ENCODE measurements at regions of chr14 and their contacts with region 1.

Region 1: GRCh38 chr14:105917933-105918436 is 391.6 kb downstream of the TMEM121 start:
- DNase-seq: peak; percentile 10 to 28 (median 23)
- ATAC-seq: no peak
- H3K4me3 ChIP-seq: no peak overlapping the region
- H3K27ac ChIP-seq: no peak overlapping the region
- H3K4me1 ChIP-seq: no peaks in the 10 kb centered on the region
- H3K27me3 ChIP-seq: no peaks in the 10 kb centered on the region

Region 2: DNA sequence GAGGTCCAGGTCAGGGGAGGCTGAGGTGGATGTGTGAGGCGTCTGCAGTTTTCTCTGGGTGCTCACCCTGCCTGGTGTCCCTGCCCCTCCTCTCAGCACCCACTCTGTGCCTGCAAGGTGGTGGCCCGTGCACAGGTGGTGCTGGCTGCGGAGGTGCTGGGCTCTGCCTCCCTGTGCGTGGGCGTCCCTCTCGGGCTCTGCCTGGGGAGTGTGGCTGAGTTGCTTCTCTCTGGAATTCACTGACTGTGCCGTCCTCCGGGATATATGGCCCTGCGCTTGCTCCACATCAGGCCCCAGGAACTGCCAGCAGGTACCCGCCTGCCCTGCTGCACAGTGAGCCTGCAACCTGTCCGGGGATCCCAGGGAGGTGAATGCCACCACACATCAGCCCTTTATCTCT is 12.5 kb before region 1 on chr14:
- intact Hi-C with region 1: loop called in 1 of 4 experiments (anchors 2 kb)
- DNase-seq: peak in 1 of 3 donors; percentile 2
- ATAC-seq: no peak
- H3K4me3 ChIP-seq: no peak overlapping the region
- H3K27ac ChIP-seq: no peak overlapping the region
- H3K4me1 ChIP-seq: no peaks in the 10 kb centered on the region
- H3K27me3 ChIP-seq: no peaks in the 10 kb centered on the region

Region 3: GRCh38 chr14:106294324-106294723 is 376.3 kb after region 1 on chr14:
- intact Hi-C with region 1: no loop called
- DNase-seq: no peak
- ATAC-seq: no peak
- H3K4me3 ChIP-seq: no peak overlapping the region
- H3K27ac ChIP-seq: no peak overlapping the region
- H3K4me1 ChIP-seq: no peaks in the 10 kb centered on the region
- H3K27me3 ChIP-seq: no peaks in the 10 kb centered on the region